ENCODE measurements at regions of chr1 and their contacts with region 1.

Region 1: DNA sequence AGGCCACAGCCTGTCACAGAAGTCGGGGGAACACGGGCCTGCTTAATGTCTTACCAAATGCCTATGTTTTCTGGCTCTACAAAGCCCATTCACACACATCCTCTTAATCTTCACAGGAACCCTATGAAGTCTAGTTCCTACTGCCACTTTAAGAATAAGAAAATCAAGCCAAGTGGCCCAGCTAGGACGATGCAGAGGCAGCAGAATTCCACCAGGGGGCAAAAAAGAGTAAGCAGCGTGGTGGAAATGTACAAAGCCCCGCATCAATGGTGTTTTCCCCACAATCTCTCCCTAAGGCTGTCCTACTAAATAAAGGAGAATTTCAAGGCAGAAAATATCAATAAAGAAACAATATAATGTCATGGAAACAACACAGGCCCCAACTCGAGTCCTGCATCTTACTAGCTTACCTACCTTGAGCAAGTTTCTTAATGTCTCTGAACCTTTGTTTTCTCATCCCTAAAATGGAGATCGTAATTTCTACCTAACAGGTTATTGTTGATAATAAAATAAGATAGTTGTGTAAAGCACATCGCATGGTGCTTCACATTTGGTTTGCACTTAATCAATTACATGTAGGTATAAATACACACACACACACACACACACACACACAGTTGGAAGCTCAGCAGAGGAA is 21.4 kb downstream of the SEC16B start:
- DNase-seq: peak; percentile 86
- H3K4me3 Mint-ChIP-seq: no peak overlapping the region
- H3K27ac Mint-ChIP-seq: no peak overlapping the region
- H3K4me1 Mint-ChIP-seq: peaks cover 6% of the 10 kb centered on the region
- H3K27me3 Mint-ChIP-seq: no peaks in the 10 kb centered on the region
- CTCF ChIP-seq: peak; percentile 97

Region 2: DNA sequence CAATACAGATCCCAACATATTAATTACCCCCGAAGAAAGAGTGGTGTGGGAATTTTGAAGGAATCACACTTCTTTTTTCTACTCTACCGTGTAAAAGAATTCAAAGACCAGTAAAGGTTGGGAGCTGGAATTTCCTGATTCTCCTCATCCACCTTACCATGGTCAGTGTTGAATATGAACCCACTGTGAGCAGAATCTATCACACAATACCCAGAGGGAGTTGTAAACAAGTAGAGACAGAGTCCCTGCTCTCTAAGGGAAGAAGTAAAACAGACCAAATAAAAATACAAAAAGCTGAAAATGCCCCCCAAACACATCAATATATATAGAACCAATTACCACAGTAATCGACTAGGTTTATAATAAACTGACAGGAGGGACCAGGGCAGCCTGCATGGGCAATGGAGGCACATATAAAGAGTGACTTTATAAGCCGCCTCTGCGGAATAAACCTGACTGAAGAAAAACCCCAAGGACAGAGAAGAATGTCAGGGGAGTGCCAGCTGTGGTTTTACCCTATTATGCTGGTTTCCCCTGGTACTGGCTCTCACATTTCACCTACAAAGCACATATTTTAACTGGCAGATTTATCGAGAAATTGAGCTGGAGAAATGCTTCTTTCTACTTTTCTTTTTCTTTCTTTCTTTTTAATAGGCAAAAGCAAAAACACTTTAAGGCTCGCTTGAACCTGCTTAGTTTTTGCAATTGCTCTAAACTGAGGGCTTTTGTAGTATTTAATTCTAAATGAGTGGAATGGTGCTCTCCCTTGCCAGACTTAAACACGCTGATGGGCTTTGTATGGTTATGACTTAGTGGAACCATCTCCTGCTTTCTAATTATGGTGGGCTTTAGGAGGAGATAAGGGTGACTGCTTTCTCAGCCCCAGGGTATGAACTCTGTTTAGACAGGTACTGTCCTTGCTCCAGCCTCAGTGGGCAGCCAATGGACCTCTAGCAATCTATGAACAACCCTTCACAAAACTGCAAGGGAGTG is 1028.8 kb before region 1 on chr1:
- CTCF ChIA-PET with region 1: interaction called, 32 read pairs
- POLR2A ChIA-PET with region 1: no interaction called
- intact Hi-C with region 1: no loop called
- DNase-seq: no peak
- H3K4me3 Mint-ChIP-seq: no peak overlapping the region
- H3K27ac Mint-ChIP-seq: no peak overlapping the region
- H3K4me1 Mint-ChIP-seq: no peaks in the 10 kb centered on the region
- H3K27me3 Mint-ChIP-seq: peaks cover 26% of the 10 kb centered on the region
- CTCF ChIP-seq: no peak

Region 3: DNA sequence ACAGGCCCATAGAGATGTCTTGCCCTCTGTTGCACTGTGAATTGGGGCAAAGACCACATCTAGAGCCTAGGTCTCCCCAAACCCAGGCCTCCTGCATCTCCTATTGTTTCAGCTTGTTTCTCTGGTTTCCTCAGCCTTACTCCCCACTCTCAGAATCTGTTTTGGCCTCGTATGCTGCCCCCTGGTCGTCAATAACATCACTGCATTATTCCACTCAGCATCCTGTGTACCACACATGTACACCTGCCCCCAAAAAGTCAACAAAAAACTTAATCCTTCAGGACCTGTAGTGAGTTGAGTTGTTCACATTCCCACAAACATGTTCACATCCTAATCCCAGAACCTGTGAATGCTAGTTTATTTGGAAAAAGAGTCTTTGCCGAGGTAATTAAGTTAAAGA is 592.9 kb before region 1 on chr1:
- CTCF ChIA-PET with region 1: interaction called, 17 read pairs
- POLR2A ChIA-PET with region 1: no interaction called
- intact Hi-C with region 1: loop called (anchors 1 kb)
- DNase-seq: peak; percentile 70
- H3K4me3 Mint-ChIP-seq: no peak overlapping the region
- H3K27ac Mint-ChIP-seq: no peak overlapping the region
- H3K4me1 Mint-ChIP-seq: no peaks in the 10 kb centered on the region
- H3K27me3 Mint-ChIP-seq: peaks cover 22% of the 10 kb centered on the region
- CTCF ChIP-seq: peak; percentile 55

Region 4: DNA sequence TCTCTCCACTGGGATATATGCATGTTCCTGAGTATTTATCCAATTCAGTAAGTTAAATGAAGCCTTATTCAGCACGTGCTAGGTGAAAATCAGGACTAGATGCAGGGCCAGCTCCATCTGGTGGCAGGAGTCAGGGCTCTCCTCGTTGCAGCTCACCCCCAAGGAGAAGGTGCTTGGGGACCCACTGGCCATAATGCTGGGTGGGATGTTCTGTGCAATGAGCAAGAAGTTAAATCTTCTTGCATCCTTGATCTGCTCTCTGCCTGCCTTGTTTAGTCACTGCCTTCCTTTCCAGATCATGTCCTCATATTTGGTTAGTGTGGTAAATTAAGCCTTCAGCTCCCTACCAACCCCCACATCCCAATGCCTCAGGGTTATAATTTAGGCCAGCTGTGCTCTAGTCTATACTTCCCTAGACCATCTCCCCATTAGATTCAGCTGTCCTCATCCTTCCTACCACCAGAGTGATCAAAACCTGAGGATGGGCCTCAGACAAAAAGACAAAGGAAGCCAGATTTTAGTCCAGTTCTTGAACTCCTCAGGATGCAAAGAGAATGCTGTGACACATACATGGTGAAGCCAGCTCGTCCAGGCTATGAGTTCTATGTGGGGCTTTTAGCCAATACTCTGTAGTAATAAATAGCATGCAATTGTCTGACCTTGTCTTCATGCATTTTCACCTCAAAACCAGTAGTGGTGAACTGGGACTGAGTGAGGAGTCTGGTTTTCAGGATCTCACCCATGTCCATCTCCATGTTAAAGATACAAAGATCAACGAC is 34.5 kb before region 1 on chr1:
- CTCF ChIA-PET with region 1: interaction called, 29 read pairs
- POLR2A ChIA-PET with region 1: no interaction called
- intact Hi-C with region 1: no loop called
- DNase-seq: peak; percentile 48
- H3K4me3 Mint-ChIP-seq: no peak overlapping the region
- H3K27ac Mint-ChIP-seq: no peak overlapping the region
- H3K4me1 Mint-ChIP-seq: no peaks in the 10 kb centered on the region
- H3K27me3 Mint-ChIP-seq: no peaks in the 10 kb centered on the region
- CTCF ChIP-seq: peak; percentile 48

Region 5: GRCh38 chr1:177959811-177960515 is 11.5 kb after region 1 on chr1:
- CTCF ChIA-PET with region 1: interaction called, 18 read pairs
- POLR2A ChIA-PET with region 1: no interaction called
- intact Hi-C with region 1: no loop called
- DNase-seq: peak; percentile 50
- H3K4me3 Mint-ChIP-seq: no peak overlapping the region
- H3K27ac Mint-ChIP-seq: no peak overlapping the region
- H3K4me1 Mint-ChIP-seq: peaks cover 6% of the 10 kb centered on the region
- H3K27me3 Mint-ChIP-seq: no peaks in the 10 kb centered on the region
- CTCF ChIP-seq: peak; percentile 74

Region 6: GRCh38 chr1:178126790-178127189 is 178.3 kb after region 1 on chr1:
- CTCF ChIA-PET with region 1: no interaction called
- POLR2A ChIA-PET with region 1: no interaction called
- intact Hi-C with region 1: no loop called
- DNase-seq: peak; percentile 87
- H3K4me3 Mint-ChIP-seq: peak overlapping the region; percentile 60
- H3K27ac Mint-ChIP-seq: peak overlapping the region; percentile 96
- H3K4me1 Mint-ChIP-seq: peaks cover 42% of the 10 kb centered on the region
- H3K27me3 Mint-ChIP-seq: no peaks in the 10 kb centered on the region
- CTCF ChIP-seq: no peak

Measured in MCF 10A (cell line).